ENCODE measurements at regions of chr10 and their contacts with region 1.

Region 1: GRCh38 chr10:70880077-70880534 is 8.3 kb downstream of the PCBD1 start:
- DNase-seq: peak; percentile 76
- ATAC-seq: peak; percentile 82

Region 2: DNA sequence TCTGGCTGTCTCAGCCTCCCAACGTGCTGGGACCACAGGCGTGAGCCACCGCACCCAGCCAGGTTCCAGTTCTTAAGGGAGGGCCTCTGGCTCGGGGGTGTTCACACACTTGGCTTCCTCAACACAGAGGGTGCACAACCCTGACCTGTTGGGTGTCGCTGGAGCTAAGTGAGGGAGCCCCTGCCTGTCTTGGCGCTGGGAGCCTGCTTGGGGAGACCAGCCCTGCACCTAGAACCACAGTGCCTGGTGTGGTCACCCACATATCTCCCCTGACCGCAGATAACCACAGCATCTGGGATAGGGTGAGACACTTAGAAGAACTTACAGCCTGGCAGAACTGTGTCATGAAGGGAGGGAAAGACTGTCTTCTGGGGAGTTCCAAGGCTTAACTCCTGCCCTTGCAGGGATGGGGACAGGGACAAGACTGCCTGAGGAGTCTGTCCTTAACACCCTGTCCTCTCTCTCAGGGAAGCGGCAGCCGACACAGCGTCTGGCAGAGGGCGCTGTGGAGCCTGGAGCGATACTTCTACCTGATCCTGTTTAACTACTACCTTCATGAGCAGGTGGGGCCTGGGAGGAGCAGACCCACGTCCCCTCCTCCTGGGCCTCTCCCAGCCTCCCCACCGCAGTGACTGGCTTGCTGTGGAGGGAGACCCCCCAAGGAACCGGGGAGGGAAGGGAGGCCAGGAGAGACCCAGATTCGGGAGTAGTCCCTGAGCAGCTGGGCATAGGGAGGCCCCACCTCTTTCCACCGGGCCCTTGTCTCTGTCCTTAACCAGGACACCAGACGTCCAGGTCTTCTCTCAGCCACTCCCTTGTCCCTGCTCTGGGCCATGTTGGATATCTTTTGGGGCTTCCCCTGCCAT is 342.5 kb before region 1 on chr10:
- intact Hi-C with region 1: no loop called
- DNase-seq: peak; percentile 41
- ATAC-seq: no peak

Region 3: DNA sequence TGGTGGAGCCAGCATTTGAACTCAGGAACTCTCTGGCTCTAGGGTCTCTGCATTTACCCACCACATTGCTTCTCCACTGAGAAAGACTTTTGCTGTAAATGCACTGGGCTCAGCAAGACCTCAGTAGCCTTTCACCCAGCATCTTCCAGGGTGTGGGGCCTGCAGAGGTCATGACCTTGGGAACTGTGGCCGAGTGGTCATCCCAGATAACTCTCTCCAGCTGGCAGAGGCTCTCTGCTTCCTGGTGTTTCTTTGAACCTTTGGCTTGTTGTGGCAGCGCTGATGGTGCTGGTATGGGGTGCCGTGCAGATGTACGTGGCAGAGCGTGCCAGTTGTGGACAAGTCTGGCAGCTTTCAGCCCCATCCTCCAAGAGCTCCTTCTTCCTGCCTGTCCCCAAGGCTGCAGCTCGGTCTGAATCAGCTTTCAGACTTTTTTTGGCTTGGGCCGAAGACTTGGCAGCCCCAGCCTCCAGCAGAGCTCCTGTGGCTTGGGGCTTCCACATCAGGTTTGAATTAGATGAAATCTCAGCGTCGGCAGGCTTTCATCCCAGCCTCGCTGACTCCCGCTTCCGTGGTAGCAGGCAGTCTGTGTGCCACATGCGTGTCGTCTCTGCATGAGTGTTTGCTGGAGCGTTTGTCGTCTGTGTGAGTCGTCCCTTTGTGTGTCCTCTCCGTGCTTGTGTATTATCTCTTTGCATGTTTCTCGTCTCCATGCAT is 186.3 kb before region 1 on chr10:
- intact Hi-C with region 1: no loop called
- DNase-seq: peak; percentile 70
- ATAC-seq: peak; percentile 83

Region 4: DNA sequence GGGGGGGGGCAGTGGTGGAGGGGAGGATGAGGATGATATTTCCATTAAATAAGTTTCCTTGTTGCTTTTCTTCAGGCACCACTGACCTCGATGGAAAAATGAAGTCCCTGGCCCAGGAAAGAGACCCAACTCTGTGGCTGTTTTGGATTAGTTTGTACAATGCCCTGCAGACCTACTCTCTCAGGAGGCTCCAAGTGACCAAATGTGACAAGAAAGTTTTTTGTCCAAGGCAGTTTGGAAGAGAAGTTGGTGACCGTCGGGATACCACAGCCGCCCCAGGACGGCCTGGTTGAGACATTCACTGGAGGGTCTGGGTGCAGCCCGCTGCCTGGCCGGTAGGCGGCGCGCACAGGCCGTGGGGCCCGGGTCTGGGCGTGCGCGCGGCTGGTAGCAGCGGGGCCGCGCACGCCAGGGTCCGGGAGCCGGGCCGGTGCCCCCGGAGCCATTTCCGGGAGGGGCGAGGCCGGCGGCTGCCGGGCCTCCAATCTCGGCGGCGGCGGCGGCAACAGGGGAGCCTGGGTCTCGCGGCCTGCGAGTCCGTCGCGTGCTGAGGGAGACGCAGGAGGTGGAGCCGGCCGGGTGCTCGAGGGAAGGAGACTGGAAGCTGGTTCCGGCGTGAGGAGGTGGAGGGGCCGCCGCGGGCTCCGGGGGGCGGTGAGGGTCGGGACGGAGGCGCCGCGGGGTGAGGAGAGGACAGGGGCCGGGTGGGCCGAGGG is 64.4 kb before region 1 on chr10 and contains the start of gene SGPL1:
- intact Hi-C with region 1: loop called (anchors 2 kb)
- DNase-seq: peak; percentile 93
- ATAC-seq: peak; percentile 98
- total RNA-seq, gene SGPL1: 11.6 TPM